ENCODE measurements at regions of chrX and their contacts with region 1.

Region 1: GRCh38 chrX:18203631-18204030 is 17.1 kb downstream of the BEND2 start:
- DNase-seq: no peak
- H3K4me3 ChIP-seq: no peak overlapping the region
- H3K27ac ChIP-seq: no peak overlapping the region
- H3K4me1 ChIP-seq: no peaks in the 10 kb centered on the region
- H3K27me3 ChIP-seq: peaks cover 0 to 7% of the 10 kb centered on the region in 2 donors
- CTCF ChIP-seq: no peak
- POLR2A ChIP-seq: no peak

Region 2: DNA sequence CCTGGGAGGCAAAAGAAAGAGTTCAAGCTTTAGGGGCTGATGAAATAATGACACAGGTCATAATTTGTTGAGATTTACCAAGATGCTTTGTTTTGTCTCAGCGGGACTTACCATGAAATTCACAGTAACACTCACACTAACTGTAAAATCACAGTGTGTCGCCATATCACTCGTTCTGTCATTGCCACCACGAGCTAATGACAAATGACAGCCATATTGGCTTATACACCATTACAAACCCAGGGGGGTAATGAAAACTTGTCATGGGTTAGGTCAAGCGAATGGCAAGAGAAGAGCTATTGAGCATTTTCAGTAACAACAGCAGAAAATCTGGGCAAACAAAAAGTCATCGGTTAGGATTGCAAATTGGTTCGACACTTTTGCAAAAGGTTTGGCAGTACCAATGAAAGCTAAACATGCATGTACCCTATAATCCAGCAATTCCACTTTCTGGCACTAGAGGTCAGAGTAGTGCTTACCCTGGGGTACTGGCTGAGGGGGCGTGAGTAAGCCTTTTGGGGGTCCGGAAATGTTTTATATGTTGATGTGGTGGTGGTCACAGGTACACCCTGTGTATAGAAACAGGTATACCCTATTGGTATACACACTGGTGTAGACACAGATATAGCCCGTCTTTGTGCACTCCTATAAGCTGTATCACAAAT is 258.7 kb before region 1 on chrX:
- intact Hi-C with region 1: loop called (anchors 5 kb)
- DNase-seq: no peak
- H3K4me3 ChIP-seq: no peak overlapping the region
- H3K27ac ChIP-seq: no peak overlapping the region
- H3K4me1 ChIP-seq: no peaks in the 10 kb centered on the region
- H3K27me3 ChIP-seq: peaks cover 0 to 18% of the 10 kb centered on the region in 2 donors
- CTCF ChIP-seq: peak in 1 of 3 donors; percentile 25
- POLR2A ChIP-seq: no peak

Region 3: DNA sequence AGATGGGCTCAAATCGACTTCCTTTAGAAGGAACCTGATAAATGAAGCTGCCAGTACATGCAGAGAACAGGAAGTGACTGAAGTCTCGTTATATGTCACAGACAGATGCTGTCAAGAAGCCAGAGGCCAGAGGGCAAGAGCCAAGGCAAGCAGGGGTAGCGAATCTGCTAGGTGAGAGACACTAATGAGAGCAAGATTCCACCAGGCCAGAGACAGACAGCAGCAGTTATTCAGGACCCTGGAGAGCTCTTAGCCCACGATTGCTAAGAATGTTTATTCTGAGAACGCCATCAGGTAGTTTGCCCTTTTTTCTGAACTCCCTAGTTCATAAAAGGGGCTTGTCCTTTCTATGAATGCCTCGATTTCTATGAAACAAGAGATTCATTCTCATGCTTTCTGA is 56.7 kb before region 1 on chrX:
- intact Hi-C with region 1: no loop called
- DNase-seq: no peak
- H3K4me3 ChIP-seq: no peak overlapping the region
- H3K27ac ChIP-seq: no peak overlapping the region
- H3K4me1 ChIP-seq: no peaks in the 10 kb centered on the region
- H3K27me3 ChIP-seq: peaks cover 0 to 5% of the 10 kb centered on the region in 2 donors
- CTCF ChIP-seq: no peak
- POLR2A ChIP-seq: no peak

Region 4: DNA sequence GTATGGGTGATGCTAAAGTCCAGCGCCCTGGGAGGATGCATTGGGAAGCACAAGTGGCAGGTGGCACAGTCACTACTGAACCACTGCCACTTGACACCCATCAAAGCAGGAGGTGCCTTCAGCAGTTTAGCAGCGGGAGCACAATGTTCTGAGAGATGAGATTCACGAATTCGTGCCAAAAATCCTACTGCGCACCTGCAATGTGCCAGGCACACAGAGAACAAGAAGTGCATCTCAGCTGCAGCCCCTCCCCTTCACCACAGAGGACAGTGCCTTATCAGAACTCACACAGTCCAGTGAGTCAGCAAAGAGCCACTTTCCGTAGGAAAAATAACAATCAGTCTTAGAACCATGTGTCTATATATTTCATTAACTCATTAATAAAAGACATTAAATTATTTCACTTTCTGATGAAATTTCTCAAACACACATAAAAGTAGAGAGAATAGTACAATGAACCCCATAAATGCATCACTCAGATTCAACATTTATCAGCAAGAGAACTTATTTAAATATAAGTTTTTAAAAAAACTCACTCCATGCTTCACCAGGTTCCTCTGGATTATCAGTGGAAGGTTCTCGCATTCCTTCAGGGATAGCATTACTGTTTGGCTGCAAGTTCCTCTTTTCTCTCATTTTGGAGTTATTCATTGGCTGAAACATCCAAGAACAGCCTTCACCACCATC is 30.0 kb before region 1 on chrX:
- intact Hi-C with region 1: no loop called
- DNase-seq: no peak
- H3K4me3 ChIP-seq: no peak overlapping the region
- H3K27ac ChIP-seq: no peak overlapping the region
- H3K4me1 ChIP-seq: no peaks in the 10 kb centered on the region
- H3K27me3 ChIP-seq: peaks cover 0 to 15% of the 10 kb centered on the region in 2 donors
- CTCF ChIP-seq: no peak
- POLR2A ChIP-seq: no peak

Region 5: GRCh38 chrX:19046343-19047215 is 842.9 kb after region 1 on chrX:
- intact Hi-C with region 1: no loop called
- DNase-seq: no peak
- H3K4me3 ChIP-seq: no peak overlapping the region
- H3K27ac ChIP-seq: no peak overlapping the region
- H3K4me1 ChIP-seq: no peaks in the 10 kb centered on the region
- H3K27me3 ChIP-seq: peaks cover 0 to 5% of the 10 kb centered on the region in 2 donors
- CTCF ChIP-seq: no peak
- POLR2A ChIP-seq: no peak